CD4-positive, alpha-beta memory T cell (primary cell): ENCODE measurements at regions of chr2 and their contacts with region 1.

Region 1: DNA sequence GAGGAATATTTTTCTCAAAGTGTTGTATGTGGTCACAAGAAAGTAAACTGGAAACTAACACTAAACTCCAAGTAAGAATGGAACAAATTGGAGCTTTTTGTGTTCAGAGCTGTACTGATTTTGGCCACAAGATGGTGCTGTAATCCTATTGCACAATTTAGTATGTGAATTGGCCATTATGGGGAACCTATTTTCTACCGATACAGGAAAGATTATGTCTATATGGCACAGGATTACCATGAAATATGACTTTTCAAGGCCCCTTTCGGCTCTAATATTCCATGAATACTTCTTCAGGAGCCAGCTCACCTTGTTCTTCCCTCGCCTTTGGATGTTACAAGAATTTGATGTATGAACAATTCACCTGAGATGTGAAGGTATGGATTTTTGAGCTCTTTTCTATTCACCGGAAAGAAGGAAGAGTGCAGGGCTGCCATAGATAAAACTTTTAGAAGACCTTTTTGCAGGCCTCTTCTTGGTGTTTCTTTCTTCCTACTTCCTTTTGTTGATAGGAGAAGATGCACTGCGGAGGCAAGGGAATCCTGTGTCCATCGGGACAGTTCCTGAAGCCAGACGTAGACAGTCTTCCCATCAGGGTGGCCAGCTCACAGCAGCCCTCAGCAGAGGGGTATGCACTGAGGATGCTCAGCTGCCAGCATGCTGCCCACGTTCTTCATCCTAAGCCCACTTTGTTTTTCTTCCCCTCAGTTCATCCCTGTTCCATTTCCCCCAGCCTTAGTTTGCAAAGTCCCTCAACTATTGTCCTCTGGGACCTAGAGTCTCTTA is 13.3 kb downstream of the MRPL44 start:
- DNase-seq: peak; percentile 44 to 54 (median 54)
- H3K4me3 ChIP-seq: no peak overlapping the region
- H3K4me3 Mint-ChIP-seq: no peak overlapping the region
- H3K27ac ChIP-seq: no peak overlapping the region
- H3K27ac Mint-ChIP-seq: peak overlapping the region in 2 of 7 donors; percentile 18 to 30
- H3K4me1 ChIP-seq: peaks cover 6% of the 10 kb centered on the region
- H3K4me1 Mint-ChIP-seq: peaks cover 2 to 8% (median 5%) of the 10 kb centered on the region in 4 donors
- H3K27me3 ChIP-seq: no peaks in the 10 kb centered on the region
- H3K27me3 Mint-ChIP-seq: no peaks in the 10 kb centered on the region

Region 2: GRCh38 chr2:223797811-223798721 is 172.5 kb before region 1 on chr2:
- CTCF ChIA-PET with region 1: no interaction called
- POLR2A ChIA-PET with region 1: no interaction called
- intact Hi-C with region 1: no loop called
- DNase-seq: no peak
- H3K4me3 ChIP-seq: no peak overlapping the region
- H3K4me3 Mint-ChIP-seq: no peak overlapping the region
- H3K27ac ChIP-seq: no peak overlapping the region
- H3K27ac Mint-ChIP-seq: no peak overlapping the region
- H3K4me1 ChIP-seq: no peaks in the 10 kb centered on the region
- H3K4me1 Mint-ChIP-seq: peaks cover 4 to 6% (median 5%) of the 10 kb centered on the region in 4 donors
- H3K27me3 ChIP-seq: no peaks in the 10 kb centered on the region
- H3K27me3 Mint-ChIP-seq: no peaks in the 10 kb centered on the region

Region 3: DNA sequence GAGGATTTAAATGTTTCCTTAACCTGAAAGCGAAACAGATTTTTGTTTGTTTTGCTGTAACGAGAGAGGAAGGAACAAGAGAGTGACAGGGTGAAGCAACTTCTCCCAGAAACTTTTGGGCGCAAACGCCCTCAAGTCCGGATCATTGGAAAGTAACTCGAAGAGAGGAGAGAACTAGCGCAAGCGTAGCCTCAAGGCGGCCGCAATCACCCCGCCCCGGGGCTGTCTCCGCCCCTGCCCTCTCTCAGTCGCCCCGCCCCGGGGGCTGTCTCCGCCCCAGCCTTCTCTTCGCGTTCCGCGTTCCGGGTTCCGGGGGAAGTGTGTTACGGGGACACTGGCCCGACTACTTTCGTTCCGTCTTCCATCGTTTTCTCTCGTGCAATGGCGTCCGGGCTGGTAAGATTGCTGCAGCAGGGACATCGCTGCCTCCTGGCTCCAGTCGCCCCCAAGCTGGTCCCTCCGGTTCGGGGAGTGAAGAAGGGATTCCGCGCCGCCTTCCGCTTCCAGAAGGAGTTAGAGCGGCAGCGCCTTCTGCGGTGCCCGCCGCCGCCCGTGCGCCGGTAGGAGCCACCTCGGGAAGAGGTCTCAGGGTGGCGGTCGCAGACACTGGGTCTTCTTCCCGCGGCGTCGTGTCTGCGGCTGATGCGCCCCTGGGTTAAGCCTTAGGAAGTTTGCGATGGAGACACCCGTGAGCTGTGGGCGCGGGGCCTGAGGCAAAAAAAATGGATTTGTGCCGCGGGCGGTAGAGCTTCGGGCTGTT is 13.3 kb before region 1 on chr2 and contains the start of gene MRPL44:
- CTCF ChIA-PET with region 1: interaction called, 53 read pairs
- POLR2A ChIA-PET with region 1: interaction called, 7 read pairs
- intact Hi-C with region 1: no loop called
- DNase-seq: peak; percentile 93 to 96 (median 95)
- H3K4me3 ChIP-seq: peak within 1 kb of the TSS; percentile 79 to 85
- H3K4me3 Mint-ChIP-seq: peak within 1 kb of the TSS; percentile 91 to 98 (median 96)
- H3K27ac ChIP-seq: peak within 1 kb of the TSS; percentile 80
- H3K27ac Mint-ChIP-seq: peak within 1 kb of the TSS; percentile 93 to 98 (median 96)
- H3K4me1 ChIP-seq: peaks cover 53% of the 10 kb centered on the region
- H3K4me1 Mint-ChIP-seq: peaks cover 43 to 75% (median 54%) of the 10 kb centered on the region in 4 donors
- H3K27me3 ChIP-seq: no peaks in the 10 kb centered on the region
- H3K27me3 Mint-ChIP-seq: no peaks in the 10 kb centered on the region
- total RNA-seq, gene MRPL44: 20.1 to 22.1 TPM

Region 4: GRCh38 chr2:224357098-224357901 is 386.8 kb after region 1 on chr2:
- CTCF ChIA-PET with region 1: no interaction called
- POLR2A ChIA-PET with region 1: no interaction called
- intact Hi-C with region 1: loop called (anchors 5 kb)
- DNase-seq: peak; percentile 55 to 66 (median 63)
- H3K4me3 ChIP-seq: no peak overlapping the region
- H3K4me3 Mint-ChIP-seq: no peak overlapping the region
- H3K27ac ChIP-seq: no peak overlapping the region
- H3K27ac Mint-ChIP-seq: no peak overlapping the region
- H3K4me1 ChIP-seq: no peaks in the 10 kb centered on the region
- H3K4me1 Mint-ChIP-seq: no peaks in the 10 kb centered on the region
- H3K27me3 ChIP-seq: no peaks in the 10 kb centered on the region
- H3K27me3 Mint-ChIP-seq: peaks cover 4 to 9% of the 10 kb centered on the region in 2 donors

Region 5: GRCh38 chr2:224650815-224651439 is 680.4 kb after region 1 on chr2:
- CTCF ChIA-PET with region 1: interaction called, 4 read pairs
- POLR2A ChIA-PET with region 1: no interaction called
- intact Hi-C with region 1: loop called (anchors 5 kb)
- DNase-seq: peak in 4 of 5 donors; percentile 49 to 51 (median 50)
- H3K4me3 ChIP-seq: no peak overlapping the region
- H3K4me3 Mint-ChIP-seq: no peak overlapping the region
- H3K27ac ChIP-seq: no peak overlapping the region
- H3K27ac Mint-ChIP-seq: peak overlapping the region in 1 of 7 donors; percentile 4
- H3K4me1 ChIP-seq: no peaks in the 10 kb centered on the region
- H3K4me1 Mint-ChIP-seq: peaks cover 0 to 3% (median under 1%) of the 10 kb centered on the region in 4 donors
- H3K27me3 ChIP-seq: no peaks in the 10 kb centered on the region
- H3K27me3 Mint-ChIP-seq: peaks cover 3 to 9% of the 10 kb centered on the region in 2 donors